ENCODE measurements at regions of chr9 and their contacts with region 1.

Region 1: DNA sequence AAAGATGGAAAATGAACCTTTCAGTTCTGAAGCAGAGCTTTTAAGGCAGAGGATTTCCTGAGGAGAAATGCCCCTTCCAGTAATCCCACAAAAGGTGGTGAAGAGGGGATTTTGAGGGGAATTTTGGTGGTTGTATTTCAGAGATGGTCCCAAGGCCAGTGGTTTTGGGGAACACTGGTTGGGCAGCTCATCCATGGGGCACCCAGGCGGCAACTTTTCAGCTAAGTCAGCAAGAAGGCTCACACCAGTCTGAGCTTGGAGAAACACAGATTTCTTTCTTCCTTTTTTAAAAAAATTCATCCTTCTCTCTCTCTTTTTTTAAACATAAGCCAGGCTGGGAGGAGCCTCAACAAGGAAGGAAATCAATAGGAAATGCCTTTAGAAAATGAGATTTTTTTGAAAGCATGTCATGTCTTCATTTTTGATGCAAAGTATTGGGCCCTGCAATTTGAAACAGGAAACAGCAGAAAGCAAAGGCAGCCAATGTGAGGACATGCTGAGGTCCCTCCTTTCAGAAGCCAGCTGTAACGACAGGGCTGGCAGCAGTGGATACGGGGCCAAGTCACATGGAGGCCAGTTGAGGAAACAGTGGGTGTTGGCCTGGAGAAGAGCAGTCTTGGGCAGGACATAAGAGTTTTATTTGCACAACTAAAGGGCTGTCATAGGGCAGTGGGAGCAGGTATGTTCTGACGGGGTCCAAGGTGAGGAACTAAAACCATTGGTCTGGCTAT is 155.3 kb upstream of the KLF4 start:
- DNase-seq: peak; percentile 86
- H3K4me3 ChIP-seq: no peak overlapping the region
- H3K27ac ChIP-seq: peak overlapping the region; percentile 6
- H3K4me1 ChIP-seq: peaks cover 10% of the 10 kb centered on the region
- H3K27me3 ChIP-seq: peaks cover 0 to 1% of the 10 kb centered on the region in 2 experiments
- CTCF ChIP-seq: no peak
- POLR2A ChIP-seq: no peak

Region 2: DNA sequence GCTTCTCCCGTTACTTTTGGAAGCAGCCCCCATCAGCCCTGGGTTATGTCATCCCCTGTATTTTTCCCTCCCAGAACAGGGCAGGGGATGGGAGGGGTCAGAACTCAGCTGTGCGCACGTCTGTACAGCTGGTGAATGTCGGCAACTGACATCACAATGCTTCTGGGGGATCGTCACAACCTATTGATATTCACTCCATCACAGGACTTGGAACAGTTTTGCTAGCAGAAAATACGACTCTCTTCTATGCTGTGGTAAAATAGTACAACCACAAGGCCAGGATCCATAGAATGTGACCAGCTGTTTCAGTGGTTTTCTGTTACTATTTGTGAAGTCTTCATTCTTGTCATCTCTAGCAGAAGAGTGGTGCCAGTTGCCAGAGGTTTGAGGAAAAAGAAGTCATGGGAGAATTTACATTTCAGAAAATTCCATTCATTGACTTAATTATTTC is 78.3 kb before region 1 on chr9:
- CTCF ChIA-PET with region 1: no interaction called
- POLR2A ChIA-PET with region 1: no interaction called
- dilution Hi-C with region 1: no loop called
- intact Hi-C with region 1: no loop called
- DNase-seq: no peak
- H3K4me3 ChIP-seq: no peak overlapping the region
- H3K27ac ChIP-seq: no peak overlapping the region
- H3K4me1 ChIP-seq: peaks cover 5% of the 10 kb centered on the region
- H3K27me3 ChIP-seq: no peaks in the 10 kb centered on the region
- CTCF ChIP-seq: no peak
- POLR2A ChIP-seq: no peak

Region 3: GRCh38 chr9:107667231-107668070 is 22.6 kb after region 1 on chr9:
- CTCF ChIA-PET with region 1: no interaction called
- POLR2A ChIA-PET with region 1: no interaction called
- dilution Hi-C with region 1: no loop called
- intact Hi-C with region 1: loop called (anchors 1 kb)
- DNase-seq: peak; percentile 41
- H3K4me3 ChIP-seq: no peak overlapping the region
- H3K27ac ChIP-seq: no peak overlapping the region
- H3K4me1 ChIP-seq: peaks cover 9% of the 10 kb centered on the region
- H3K27me3 ChIP-seq: no peaks in the 10 kb centered on the region
- CTCF ChIP-seq: no peak
- POLR2A ChIP-seq: no peak

Measured in endothelial cell of umbilical vein (primary cell).